ENCODE measurements at regions of chr11 and their contacts with region 1.

Region 1: DNA sequence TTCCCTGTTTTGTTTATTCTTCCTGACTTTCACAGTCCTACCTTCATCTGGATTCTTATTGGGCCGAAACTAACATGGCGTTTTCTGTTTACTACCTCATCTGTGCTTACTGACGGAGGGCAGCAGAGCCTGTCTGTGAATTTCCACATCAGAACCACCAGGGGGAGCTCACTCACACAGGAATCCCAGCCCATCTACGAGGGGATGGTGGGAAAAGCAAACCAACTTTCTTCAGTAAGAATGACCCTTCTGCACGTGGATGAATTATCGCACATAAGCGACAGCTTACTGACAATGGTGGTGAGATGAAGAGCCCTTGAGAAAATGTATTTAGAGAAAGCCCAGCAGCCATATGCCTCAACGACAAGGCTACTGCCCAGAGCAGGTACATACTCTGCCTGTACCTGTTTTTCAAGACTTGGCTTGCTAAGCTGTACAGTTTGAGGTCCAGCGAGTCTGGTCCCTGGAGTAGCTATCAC is 42.5 kb downstream of the LARGE2 start:
- DNase-seq: peak; percentile 54 to 62
- H3K4me3 ChIP-seq: no peak overlapping the region
- H3K27ac ChIP-seq: no peak overlapping the region
- H3K4me1 ChIP-seq: no peaks in the 10 kb centered on the region
- H3K27me3 ChIP-seq: no peaks in the 10 kb centered on the region
- CTCF ChIP-seq: peak; percentile 96

Region 2: GRCh38 chr11:45259592-45259991 is 705.4 kb before region 1 on chr11:
- CTCF ChIA-PET with region 1: no interaction called
- POLR2A ChIA-PET with region 1: no interaction called
- intact Hi-C with region 1: no loop called
- DNase-seq: peak; percentile 48 to 63
- H3K4me3 ChIP-seq: no peak overlapping the region
- H3K27ac ChIP-seq: no peak overlapping the region
- H3K4me1 ChIP-seq: 0 out of 2 replicates have a peak, but pooled peaks cover 3% of the 10 kb centered on the region
- H3K27me3 ChIP-seq: peaks cover 47% of the 10 kb centered on the region
- CTCF ChIP-seq: no peak

Region 3: GRCh38 chr11:46308631-46309419 is 343.9 kb after region 1 on chr11:
- CTCF ChIA-PET with region 1: no interaction called
- POLR2A ChIA-PET with region 1: interaction called, 3 read pairs
- intact Hi-C with region 1: loop called (anchors 1 kb)
- DNase-seq: peak; percentile 54 to 74
- H3K4me3 ChIP-seq: no peak overlapping the region
- H3K27ac ChIP-seq: no peak overlapping the region
- H3K4me1 ChIP-seq: peaks cover 31% of the 10 kb centered on the region
- H3K27me3 ChIP-seq: no peaks in the 10 kb centered on the region
- CTCF ChIP-seq: peak; percentile 99

Measured in PC-9 (cell line).